Heart left ventricle (tissue), 16 donors: ENCODE measurements at regions of chr9 and their contacts with region 1.

Region 1: GRCh38 chr9:134024828-134025605 is at the start of gene BRD3OS:
- DNase-seq: peak; percentile 96 to 98 (median 97)
- ATAC-seq: peak; percentile 96 to 98 (median 96)
- H3K4me3 ChIP-seq: peak within 1 kb of the TSS; percentile 55 to 96 (median 86)
- H3K27ac ChIP-seq: peak within 1 kb of the TSS in 11 of 12 donors; percentile 12 to 79 (median 51)
- H3K4me1 ChIP-seq: peaks cover 0 to 11% (median 8%) of the 10 kb centered on the region in 12 donors
- H3K27me3 ChIP-seq: no peaks in the 10 kb centered on the region
- CTCF ChIP-seq: no peak
- POLR2A ChIP-seq: peak in 1 of 2 donors; percentile 42
- total RNA-seq, gene BRD3OS: 5.3 to 13.8 (median 9.3) TPM

Region 2: DNA sequence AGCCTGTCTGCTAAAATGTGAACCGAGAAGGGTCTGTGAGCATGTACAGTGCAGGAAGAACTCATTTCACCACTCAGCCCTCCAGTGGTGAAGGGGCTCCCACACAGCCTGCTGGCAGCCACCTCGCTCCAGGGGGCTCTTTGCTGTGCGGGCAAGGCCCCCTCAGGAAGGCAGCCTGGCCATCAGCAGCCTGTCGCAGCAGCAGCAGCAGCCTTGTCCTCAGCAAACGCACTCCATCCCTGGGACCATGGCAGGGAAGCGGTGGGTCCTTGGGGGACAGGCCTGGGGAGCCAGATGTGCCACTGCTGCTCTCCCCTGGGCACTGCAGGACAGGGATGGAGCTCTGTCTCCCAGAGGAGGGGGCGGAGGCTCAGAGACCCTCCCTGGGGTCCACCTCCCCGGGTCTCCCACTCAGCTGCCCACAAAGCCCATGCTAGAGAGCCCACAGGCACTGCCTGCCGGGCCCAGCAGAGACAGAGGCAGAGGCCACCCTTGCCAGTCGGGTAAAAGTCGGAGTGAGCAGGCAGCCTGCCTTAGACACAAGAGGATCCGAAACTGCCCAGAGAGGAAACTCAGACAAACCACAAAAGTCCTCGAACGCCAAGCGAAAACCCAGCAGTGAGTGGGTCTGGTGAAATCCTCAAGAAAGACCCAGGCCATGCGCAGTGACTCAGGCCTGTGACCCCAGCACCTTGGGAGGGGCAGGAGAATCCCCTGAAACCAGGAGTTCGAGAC is 34.8 kb after region 1 on chr9:
- intact Hi-C with region 1: loop called in 5 of 10 experiments (anchors 5 kb)
- DNase-seq: peak in 2 of 5 donors; percentile 39 to 66
- ATAC-seq: peak in 1 of 4 donors; percentile 3
- H3K4me3 ChIP-seq: no peak overlapping the region
- H3K27ac ChIP-seq: peak overlapping the region in 1 of 12 donors; percentile 32
- H3K4me1 ChIP-seq: peaks cover 13 to 99% (median 79%) of the 10 kb centered on the region in 12 donors
- H3K27me3 ChIP-seq: no peaks in the 10 kb centered on the region
- CTCF ChIP-seq: no peak
- POLR2A ChIP-seq: no peak

Region 3: GRCh38 chr9:134128727-134129679 is 104.0 kb after region 1 on chr9:
- intact Hi-C with region 1: loop called in 1 of 10 experiments (anchors 5 kb)
- DNase-seq: peak in 2 of 5 donors; percentile 53 to 56
- ATAC-seq: peak in 2 of 4 donors; percentile 10 to 67
- H3K4me3 ChIP-seq: no peak overlapping the region
- H3K27ac ChIP-seq: peak overlapping the region in 6 of 12 donors; percentile 37 to 74 (median 54)
- H3K4me1 ChIP-seq: peaks cover 0 to 17% (median 8%) of the 10 kb centered on the region in 12 donors
- H3K27me3 ChIP-seq: no peaks in the 10 kb centered on the region
- CTCF ChIP-seq: no peak
- POLR2A ChIP-seq: no peak